ENCODE measurements at regions of chr10 and their contacts with region 1.

Region 1: DNA sequence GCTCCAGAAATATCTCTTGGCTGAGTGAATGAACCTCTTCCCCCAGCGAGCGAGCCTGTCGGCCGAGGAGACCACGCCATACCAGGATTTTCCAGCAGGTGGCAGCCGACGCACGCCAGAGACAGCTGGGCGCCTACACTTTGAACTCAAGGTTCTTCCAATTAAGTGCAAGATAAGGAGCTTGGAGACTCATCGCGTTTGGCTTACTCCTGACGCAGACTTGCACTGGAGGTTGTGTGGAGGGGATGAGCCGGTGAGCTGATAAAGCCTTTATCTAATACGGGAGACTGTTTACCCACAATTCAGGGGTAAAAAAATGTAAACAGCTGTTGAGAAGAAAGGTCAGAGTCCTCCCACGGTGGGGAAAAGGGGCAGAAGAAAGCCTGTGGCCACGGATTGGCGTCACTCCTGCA is 45.9 kb upstream of the EMX2 start:
- DNase-seq: peak; percentile 70 to 81
- ATAC-seq: peak; percentile 84 to 95
- H3K4me3 ChIP-seq: no peak overlapping the region
- H3K27ac ChIP-seq: no peak overlapping the region
- H3K4me1 ChIP-seq: no peaks in the 10 kb centered on the region
- CTCF ChIP-seq: peak; percentile 92
- EP300 ChIP-seq: no peak
- POLR2A ChIP-seq: no peak
- RAD21 ChIP-seq: peak; percentile 97

Region 2: DNA sequence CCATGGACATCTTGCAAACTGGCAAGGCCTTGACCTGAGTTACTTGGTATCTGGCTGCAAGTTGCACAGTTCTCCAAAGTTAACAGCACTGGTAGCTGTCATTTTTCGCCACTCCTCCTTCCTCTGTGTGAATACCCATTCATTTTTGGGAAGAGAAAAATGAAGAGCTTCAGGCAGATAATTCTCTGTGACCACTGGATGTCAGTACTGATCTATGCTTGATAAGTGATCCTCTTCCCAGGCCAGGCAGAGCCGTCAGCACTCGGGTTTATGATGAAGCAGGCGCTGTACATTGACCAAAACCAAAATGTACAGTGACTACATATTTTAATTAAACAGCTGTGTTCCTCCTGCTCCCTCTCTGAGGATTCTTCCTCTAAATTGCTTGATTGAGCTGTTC is 65.5 kb before region 1 on chr10:
- CTCF ChIA-PET with region 1: interaction called, 12 read pairs
- POLR2A ChIA-PET with region 1: no interaction called
- DNase-seq: peak; percentile 21 to 53
- ATAC-seq: peak; percentile 70 to 80
- H3K4me3 ChIP-seq: no peak overlapping the region
- H3K27ac ChIP-seq: no peak overlapping the region
- H3K4me1 ChIP-seq: peaks cover 6% of the 10 kb centered on the region; the same call in 1 of the 3 replicates
- CTCF ChIP-seq: peak; percentile 53
- EP300 ChIP-seq: no peak
- POLR2A ChIP-seq: no peak
- RAD21 ChIP-seq: peak; percentile 61 to 66

Region 3: DNA sequence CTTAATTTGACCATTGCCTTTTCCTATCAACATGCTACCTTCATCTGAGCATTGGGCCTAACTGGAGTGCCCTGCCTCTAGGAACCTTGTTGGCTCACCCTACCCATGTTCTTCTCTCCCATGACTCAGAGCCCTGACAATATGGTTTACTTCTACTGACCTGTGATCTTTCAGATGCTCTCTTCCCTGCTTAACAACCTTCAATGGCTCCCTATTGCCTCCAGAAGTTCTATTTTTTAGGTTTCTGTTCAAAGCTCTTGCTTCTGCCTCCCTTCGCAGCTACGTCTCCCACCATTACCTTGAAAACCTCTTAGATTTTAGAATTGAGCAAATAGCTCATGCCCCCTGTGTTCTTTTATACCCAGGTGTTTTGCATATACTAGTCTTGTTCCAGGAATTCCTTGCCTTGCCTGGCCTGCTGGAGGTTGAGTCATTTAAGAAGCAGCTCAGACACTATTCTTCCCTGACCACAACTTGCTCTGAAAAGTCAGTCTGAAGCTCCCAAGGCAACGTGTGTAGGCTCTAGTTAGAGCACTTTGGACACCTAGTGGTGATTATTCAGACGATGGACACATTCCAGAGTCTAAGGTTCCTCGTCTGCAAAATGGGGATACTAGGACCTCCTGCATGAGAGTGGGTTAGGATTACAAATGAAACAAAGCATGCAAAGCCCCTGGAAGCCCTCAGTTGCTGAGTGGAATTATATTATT is 18.5 kb before region 1 on chr10:
- CTCF ChIA-PET with region 1: interaction called, 33 read pairs
- POLR2A ChIA-PET with region 1: no interaction called
- DNase-seq: peak; percentile 47 to 66
- ATAC-seq: peak; percentile 74 to 90
- H3K4me3 ChIP-seq: no peak overlapping the region
- H3K27ac ChIP-seq: no peak overlapping the region
- H3K4me1 ChIP-seq: no peaks in the 10 kb centered on the region
- CTCF ChIP-seq: peak; percentile 26; the same call in 1 of the 3 replicates
- EP300 ChIP-seq: no peak
- POLR2A ChIP-seq: no peak
- RAD21 ChIP-seq: peak; percentile 42 to 53; a peak in 4 of 5 replicates

Region 4: DNA sequence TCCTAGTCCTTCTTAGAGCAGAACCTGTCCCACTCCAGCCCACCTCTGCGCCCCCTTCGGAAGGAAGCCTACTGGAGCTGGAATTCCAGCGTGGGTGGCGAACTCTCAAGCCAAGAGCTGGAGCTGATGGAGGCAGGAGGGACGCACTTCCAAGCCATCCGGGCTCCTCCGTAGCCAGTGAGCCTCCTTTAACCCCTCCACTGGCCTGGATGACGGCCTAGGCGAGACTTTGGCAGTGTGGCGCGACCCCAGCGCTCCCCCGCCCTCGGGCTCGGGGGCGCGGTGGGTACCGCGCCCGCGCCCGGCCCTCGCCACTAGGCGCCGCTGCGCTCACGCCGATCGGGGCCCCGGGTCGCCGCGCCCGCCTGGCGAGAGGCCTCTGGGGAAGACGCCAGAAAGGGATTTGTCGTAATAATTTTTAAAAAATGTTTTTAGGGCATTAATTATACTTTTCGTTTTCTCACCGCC is 40.8 kb after region 1 on chr10:
- CTCF ChIA-PET with region 1: interaction called, 18 read pairs
- POLR2A ChIA-PET with region 1: no interaction called
- DNase-seq: peak; percentile 25 to 50
- ATAC-seq: peak; percentile 45 to 74; a peak in 4 of 6 replicates
- H3K4me3 ChIP-seq: no peak overlapping the region
- H3K27ac ChIP-seq: no peak overlapping the region
- H3K4me1 ChIP-seq: 0 out of 3 replicates have a peak, but pooled peaks cover 12% of the 10 kb centered on the region
- CTCF ChIP-seq: peak; percentile 95
- EP300 ChIP-seq: no peak
- POLR2A ChIP-seq: no peak
- RAD21 ChIP-seq: peak; percentile 69 to 94

Region 5: DNA sequence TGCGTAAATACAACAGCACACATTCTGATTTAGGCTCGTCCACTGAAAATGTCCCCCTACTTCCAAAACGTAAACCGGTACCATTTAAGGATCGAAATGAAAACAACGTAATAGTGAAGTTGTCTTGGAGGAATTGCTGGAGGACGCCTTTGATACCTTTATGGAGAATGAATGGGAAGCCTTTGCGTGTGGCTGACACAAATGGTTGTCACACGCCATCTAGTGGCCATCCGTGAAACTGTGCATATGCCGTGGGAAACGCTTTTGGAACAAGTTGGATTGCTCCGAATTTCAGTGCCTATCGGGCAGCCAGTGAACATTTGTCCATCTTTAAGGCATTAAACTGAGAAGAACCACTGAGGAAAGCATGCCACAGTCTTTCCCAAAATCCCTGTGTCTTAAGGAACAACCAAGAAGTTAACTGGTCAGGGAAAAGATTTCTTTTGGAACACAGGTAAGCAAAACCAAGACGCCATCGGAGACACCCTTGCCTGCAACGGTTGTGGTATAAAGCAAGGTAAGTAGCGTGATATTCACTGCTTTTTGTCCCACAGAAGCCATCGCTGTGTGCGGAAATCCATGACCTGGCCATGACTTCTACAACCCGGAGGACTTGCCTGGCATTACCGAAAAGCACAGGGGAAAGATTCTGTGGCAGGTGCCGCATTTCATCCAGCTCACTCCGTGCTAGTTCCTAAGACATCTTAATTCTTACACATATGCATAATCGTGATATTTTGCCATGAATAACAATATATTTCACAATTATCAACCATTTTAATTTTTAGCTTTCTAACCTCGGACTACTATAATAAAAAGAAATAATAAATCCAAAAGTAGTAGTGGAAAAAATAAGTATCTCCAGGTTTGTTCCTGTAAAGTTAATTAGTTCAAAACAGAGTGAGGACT is 744.9 kb after region 1 on chr10:
- CTCF ChIA-PET with region 1: interaction called, 105 read pairs
- POLR2A ChIA-PET with region 1: no interaction called
- DNase-seq: peak; percentile 31 to 78
- ATAC-seq: peak; percentile 51 to 88; a peak in 3 of 6 replicates
- H3K4me3 ChIP-seq: no peak overlapping the region
- H3K27ac ChIP-seq: no peak overlapping the region
- H3K4me1 ChIP-seq: no peaks in the 10 kb centered on the region
- CTCF ChIP-seq: peak; percentile 92
- EP300 ChIP-seq: no peak
- POLR2A ChIP-seq: no peak
- RAD21 ChIP-seq: peak; percentile 92 to 93

Region 6: DNA sequence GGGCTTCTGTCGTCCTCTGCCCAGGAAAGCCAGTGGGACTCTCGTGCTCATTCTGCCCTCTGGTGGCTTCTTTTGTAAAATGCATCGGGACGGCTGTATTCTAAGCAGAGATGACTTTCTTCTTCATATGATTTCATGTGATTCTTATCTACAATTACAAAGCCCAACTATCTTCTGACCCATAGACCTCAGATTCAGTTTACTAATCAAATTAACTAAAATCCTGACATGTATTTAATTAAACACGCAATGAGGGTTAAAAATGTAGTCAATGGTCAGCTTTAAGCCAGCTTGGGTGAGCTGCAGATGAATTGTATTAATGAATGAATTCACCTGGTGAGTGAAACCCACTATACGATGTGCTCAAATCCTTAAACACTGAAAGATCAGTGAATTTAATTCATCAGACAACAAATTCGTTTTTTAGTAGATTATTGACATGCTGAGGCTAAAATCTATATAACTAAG is 963.1 kb after region 1 on chr10:
- CTCF ChIA-PET with region 1: interaction called, 46 read pairs
- POLR2A ChIA-PET with region 1: no interaction called
- DNase-seq: peak; percentile 61 to 65
- ATAC-seq: peak; percentile 87 to 98
- H3K4me3 ChIP-seq: no peak overlapping the region
- H3K27ac ChIP-seq: no peak overlapping the region
- H3K4me1 ChIP-seq: no peaks in the 10 kb centered on the region
- CTCF ChIP-seq: peak; percentile 76
- EP300 ChIP-seq: no peak
- POLR2A ChIP-seq: no peak
- RAD21 ChIP-seq: peak; percentile 70 to 75

Measured in A549 (cell line).